Caco-2 (cell line): ENCODE measurements at regions of chr2 and their contacts with region 1.

Region 1: DNA sequence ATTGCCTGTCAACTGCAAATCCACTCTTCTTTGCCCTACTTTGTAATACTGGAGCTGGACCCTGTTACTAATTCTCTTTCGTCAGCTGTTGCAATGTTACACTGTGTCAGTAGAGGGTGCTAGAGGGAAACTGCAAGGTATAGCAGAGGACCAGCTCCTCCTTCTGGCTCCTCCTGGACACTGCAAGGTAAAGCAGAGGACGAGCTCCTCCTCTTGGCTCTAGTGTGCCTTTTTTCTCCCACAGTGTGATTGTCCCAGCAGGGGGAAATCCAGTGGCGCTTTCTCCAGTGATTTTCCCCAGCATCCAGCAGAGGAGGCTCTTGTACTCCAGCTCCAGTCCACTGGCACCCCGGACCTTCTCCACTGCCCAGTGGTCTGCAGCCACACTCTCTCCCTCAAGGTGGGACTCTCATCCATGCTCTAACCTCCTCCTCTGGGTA is 95.6 kb downstream of the CAPN13 start:
- DNase-seq: peak; percentile 94
- H3K4me3 ChIP-seq: no peak overlapping the region
- H3K4me3 Mint-ChIP-seq: no peak overlapping the region
- H3K27ac Mint-ChIP-seq: no peak overlapping the region
- H3K4me1 ChIP-seq: no peaks in the 10 kb centered on the region
- H3K4me1 Mint-ChIP-seq: no peaks in the 10 kb centered on the region
- H3K27me3 ChIP-seq: no peaks in the 10 kb centered on the region
- H3K27me3 Mint-ChIP-seq: peaks cover 7% of the 10 kb centered on the region
- CTCF ChIP-seq: peak; percentile 100

Region 2: DNA sequence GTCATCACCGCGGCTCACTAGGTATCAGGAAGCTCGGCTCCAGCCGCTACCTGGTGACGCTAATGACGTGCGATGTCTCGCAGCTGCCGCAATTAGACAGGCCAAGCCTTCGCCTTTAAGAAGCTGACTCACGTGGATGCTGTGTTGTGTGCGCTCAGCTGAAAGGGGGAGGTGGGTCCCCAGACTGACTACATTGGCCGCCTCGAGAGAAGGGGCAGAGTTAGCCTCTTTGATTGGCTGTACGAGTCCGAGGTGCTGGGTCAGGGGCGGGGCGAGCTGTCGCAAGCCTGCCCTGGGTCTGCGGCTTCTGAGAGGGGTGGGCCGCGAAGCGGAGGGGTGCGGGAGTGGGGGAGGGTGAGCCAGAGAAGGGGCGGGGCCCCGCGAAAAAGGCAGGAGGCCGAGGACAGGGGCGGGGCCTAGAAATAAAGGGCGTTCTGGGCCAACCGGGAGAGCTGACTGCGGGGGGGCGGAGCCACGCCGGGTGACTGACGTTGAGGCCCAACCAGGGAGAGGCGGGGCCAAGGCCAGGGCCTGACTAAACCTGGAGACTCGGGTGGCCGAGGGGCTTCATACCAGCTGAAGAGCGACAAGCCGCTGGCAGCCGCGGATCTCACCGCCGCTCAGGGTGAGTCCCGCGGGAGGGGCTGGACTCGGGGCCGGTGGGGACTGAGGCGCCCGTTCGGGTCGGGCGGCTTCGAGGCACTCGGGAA is 565.1 kb before region 1 on chr2 and contains the start of gene YPEL5:
- CTCF ChIA-PET with region 1: interaction called, 20 read pairs
- POLR2A ChIA-PET with region 1: interaction called, 3 read pairs
- intact Hi-C with region 1: no loop called
- DNase-seq: peak; percentile 99
- H3K4me3 ChIP-seq: peak within 1 kb of the TSS; percentile 69
- H3K4me3 Mint-ChIP-seq: peak within 1 kb of the TSS; percentile 80
- H3K27ac Mint-ChIP-seq: peak within 1 kb of the TSS; percentile 89
- H3K4me1 ChIP-seq: peaks cover 38% of the 10 kb centered on the region
- H3K4me1 Mint-ChIP-seq: peaks cover 29% of the 10 kb centered on the region
- H3K27me3 ChIP-seq: no peaks in the 10 kb centered on the region
- H3K27me3 Mint-ChIP-seq: peaks cover 4% of the 10 kb centered on the region
- CTCF ChIP-seq: no peak
- total RNA-seq, gene YPEL5: 43.6 and 50.9 TPM in 2 replicates

Region 3: DNA sequence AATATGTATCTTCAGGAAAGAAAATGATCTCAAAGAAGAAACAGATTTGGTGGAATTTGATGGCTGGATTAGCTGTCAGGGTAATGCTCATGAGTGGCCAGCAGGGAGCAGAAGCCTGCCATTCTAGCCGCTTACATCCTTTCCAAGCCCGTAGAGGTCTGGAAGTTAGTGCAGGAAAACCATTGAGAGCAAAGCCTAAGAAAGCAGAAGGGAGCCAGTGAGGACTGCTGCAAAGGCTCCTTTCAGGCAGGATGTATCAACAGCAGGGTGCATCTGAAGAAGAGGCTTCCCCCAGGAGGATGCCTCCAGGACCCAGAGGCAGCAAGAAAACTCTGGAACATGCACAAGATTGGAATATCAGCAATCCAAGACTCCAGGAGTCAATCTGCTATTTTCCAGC is 503.2 kb before region 1 on chr2:
- CTCF ChIA-PET with region 1: interaction called, 59 read pairs
- POLR2A ChIA-PET with region 1: no interaction called
- intact Hi-C with region 1: loop called (anchors 1 kb)
- DNase-seq: peak; percentile 75
- H3K4me3 ChIP-seq: no peak overlapping the region
- H3K4me3 Mint-ChIP-seq: no peak overlapping the region
- H3K27ac Mint-ChIP-seq: no peak overlapping the region
- H3K4me1 ChIP-seq: peaks cover 6% of the 10 kb centered on the region; the same call in 1 of the 2 replicates
- H3K4me1 Mint-ChIP-seq: peaks cover 22% of the 10 kb centered on the region
- H3K27me3 ChIP-seq: no peaks in the 10 kb centered on the region
- H3K27me3 Mint-ChIP-seq: no peaks in the 10 kb centered on the region
- CTCF ChIP-seq: peak; percentile 91 to 94

Region 4: DNA sequence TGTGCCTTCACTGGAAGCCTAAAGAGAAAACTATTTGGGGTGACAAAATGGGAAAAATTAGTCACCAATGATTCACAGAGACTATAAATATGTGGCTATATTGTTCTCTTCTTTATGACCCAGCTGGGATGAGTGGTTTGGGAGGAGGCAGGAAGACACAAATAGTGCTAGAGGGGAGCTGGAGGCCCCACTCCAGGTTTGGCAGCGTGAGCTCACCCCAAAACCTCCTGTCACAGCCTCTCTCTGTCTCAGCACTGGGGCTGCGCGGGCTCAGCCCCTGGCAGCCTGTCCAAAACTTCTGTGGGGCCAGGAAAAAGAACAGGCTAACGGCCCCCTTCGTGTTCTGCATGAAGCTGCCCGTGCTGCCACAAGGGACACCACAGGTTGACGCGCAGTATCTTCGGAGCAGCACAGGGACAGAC is 337.8 kb before region 1 on chr2:
- CTCF ChIA-PET with region 1: no interaction called
- POLR2A ChIA-PET with region 1: no interaction called
- intact Hi-C with region 1: no loop called
- DNase-seq: peak in 1 of 2 experiments; percentile 16
- H3K4me3 ChIP-seq: no peak overlapping the region
- H3K4me3 Mint-ChIP-seq: no peak overlapping the region
- H3K27ac Mint-ChIP-seq: no peak overlapping the region
- H3K4me1 ChIP-seq: no peaks in the 10 kb centered on the region
- H3K4me1 Mint-ChIP-seq: no peaks in the 10 kb centered on the region
- H3K27me3 ChIP-seq: no peaks in the 10 kb centered on the region
- H3K27me3 Mint-ChIP-seq: no peaks in the 10 kb centered on the region
- CTCF ChIP-seq: peak in 1 of 2 experiments; percentile 33

Region 5: DNA sequence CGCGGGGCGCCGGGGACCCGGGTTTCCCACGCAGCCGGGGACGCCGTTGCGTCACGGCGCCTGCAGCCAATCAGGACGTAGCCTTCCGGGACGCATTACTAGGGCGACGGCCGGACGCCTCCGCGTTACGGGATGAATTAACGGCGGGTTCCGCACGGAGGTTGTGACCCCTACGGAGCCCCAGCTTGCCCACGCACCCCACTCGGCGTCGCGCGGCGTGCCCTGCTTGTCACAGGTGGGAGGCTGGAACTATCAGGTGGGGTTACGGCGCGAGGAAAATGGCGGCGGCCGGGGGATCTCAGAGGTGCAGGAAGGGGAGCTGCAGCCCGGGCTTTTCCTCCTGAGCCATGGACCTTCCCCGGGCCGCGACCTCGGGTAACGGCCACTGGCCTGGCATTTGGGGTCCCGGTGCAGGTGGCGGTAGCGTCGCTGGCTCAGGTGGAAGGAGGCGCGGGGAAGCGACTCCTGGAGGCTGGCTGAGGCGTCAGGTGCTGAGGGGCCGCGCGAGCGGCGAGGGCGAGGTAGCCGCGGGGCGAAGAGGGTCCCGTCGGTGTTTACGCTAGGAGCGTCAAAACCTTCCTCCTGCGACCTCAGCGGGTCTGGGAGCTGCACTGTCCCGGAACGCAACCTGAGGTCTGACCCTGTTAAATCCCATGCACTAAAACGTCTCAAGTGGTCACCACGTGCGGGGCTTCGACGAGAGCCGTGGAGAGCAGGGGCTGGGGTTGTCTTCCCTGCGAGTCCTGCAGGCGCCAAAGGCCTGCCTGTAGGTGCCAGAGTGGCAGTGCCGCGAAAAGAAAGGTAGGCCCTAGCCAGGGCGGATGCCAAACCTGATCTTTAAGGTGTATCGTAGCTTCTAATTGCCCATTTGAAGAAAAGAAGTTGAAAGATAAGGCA is 264.3 kb before region 1 on chr2 and contains the start of gene LCLAT1:
- CTCF ChIA-PET with region 1: interaction called, 12 read pairs
- POLR2A ChIA-PET with region 1: no interaction called
- intact Hi-C with region 1: loop called (anchors 10 kb)
- DNase-seq: peak; percentile 80 to 88
- H3K4me3 ChIP-seq: peak within 1 kb of the TSS; percentile 90
- H3K4me3 Mint-ChIP-seq: peak within 1 kb of the TSS; percentile 97
- H3K27ac Mint-ChIP-seq: peak within 1 kb of the TSS; percentile 100
- H3K4me1 ChIP-seq: peaks cover 12% of the 10 kb centered on the region; the same call in 1 of the 2 replicates
- H3K4me1 Mint-ChIP-seq: peaks cover 6% of the 10 kb centered on the region
- H3K27me3 ChIP-seq: no peaks in the 10 kb centered on the region
- H3K27me3 Mint-ChIP-seq: no peaks in the 10 kb centered on the region
- CTCF ChIP-seq: peak in 1 of 2 experiments; percentile 2
- total RNA-seq, gene LCLAT1: 52.2 and 55.8 TPM in 2 replicates

Region 6: GRCh38 chr2:30721668-30722647 is 10.3 kb after region 1 on chr2:
- CTCF ChIA-PET with region 1: interaction called, 10 read pairs
- POLR2A ChIA-PET with region 1: no interaction called
- intact Hi-C with region 1: no loop called
- DNase-seq: no peak
- H3K4me3 ChIP-seq: no peak overlapping the region
- H3K4me3 Mint-ChIP-seq: no peak overlapping the region
- H3K27ac Mint-ChIP-seq: no peak overlapping the region
- H3K4me1 ChIP-seq: no peaks in the 10 kb centered on the region
- H3K4me1 Mint-ChIP-seq: no peaks in the 10 kb centered on the region
- H3K27me3 ChIP-seq: no peaks in the 10 kb centered on the region; the same call in 1 of the 2 replicates
- H3K27me3 Mint-ChIP-seq: peaks cover 15% of the 10 kb centered on the region
- CTCF ChIP-seq: no peak

Region 7: GRCh38 chr2:30862054-30862651 is 150.5 kb after region 1 on chr2:
- CTCF ChIA-PET with region 1: interaction called, 25 read pairs
- POLR2A ChIA-PET with region 1: no interaction called
- intact Hi-C with region 1: loop called (anchors 1 kb)
- DNase-seq: peak; percentile 71 to 76
- H3K4me3 ChIP-seq: no peak overlapping the region
- H3K4me3 Mint-ChIP-seq: no peak overlapping the region
- H3K27ac Mint-ChIP-seq: no peak overlapping the region
- H3K4me1 ChIP-seq: no peaks in the 10 kb centered on the region
- H3K4me1 Mint-ChIP-seq: no peaks in the 10 kb centered on the region
- H3K27me3 ChIP-seq: no peaks in the 10 kb centered on the region
- H3K27me3 Mint-ChIP-seq: peaks cover 9% of the 10 kb centered on the region
- CTCF ChIP-seq: peak; percentile 98 to 99

Region 8: DNA sequence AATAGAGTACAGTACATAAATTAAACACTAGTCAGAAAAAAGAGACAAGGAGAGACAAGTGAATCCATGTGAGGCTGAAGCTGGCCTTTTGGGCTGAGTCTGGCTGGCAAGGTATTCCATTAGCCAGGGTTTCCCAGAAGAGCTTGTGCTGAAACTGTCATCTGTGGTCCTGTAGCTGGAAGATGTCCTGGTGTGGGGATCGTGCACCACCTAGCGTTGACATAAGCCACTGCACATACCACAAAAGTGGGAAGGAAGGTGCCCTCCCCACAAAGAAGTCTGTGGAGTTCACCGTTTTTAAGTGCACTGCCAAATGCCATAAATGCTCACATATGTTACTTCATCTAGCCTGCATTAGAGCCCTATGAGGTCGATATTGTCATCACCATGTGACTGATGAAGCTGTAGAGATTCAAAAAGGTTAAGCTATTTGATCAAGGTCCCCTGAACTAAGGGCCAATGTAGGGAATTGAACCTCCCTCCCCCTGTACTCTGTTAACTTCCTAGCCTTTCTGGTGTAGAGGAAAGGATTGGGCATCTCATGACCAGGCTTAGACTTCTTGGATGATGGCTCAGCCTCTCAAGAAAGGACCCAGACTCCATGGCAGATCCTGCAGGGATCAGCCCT is 458.5 kb after region 1 on chr2:
- CTCF ChIA-PET with region 1: interaction called, 39 read pairs
- POLR2A ChIA-PET with region 1: no interaction called
- intact Hi-C with region 1: loop called (anchors 1 kb)
- DNase-seq: peak; percentile 66 to 74
- H3K4me3 ChIP-seq: no peak overlapping the region
- H3K4me3 Mint-ChIP-seq: no peak overlapping the region
- H3K27ac Mint-ChIP-seq: no peak overlapping the region
- H3K4me1 ChIP-seq: no peaks in the 10 kb centered on the region
- H3K4me1 Mint-ChIP-seq: no peaks in the 10 kb centered on the region
- H3K27me3 ChIP-seq: no peaks in the 10 kb centered on the region
- H3K27me3 Mint-ChIP-seq: peaks cover 18% of the 10 kb centered on the region
- CTCF ChIP-seq: peak; percentile 92 to 93